ENCODE measurements at regions of chr7 and their contacts with region 1.

Region 1: GRCh38 chr7:95476904-95477594 is 8.7 kb upstream of the ASB4 start:
- DNase-seq: peak in 1 of 2 donors; percentile 45
- ATAC-seq: peak in 6 of 8 donors; percentile 56 to 74 (median 72)
- H3K4me3 ChIP-seq: no peak overlapping the region
- H3K27ac ChIP-seq: no peak overlapping the region
- H3K4me1 ChIP-seq: peaks cover 0 to 10% (median 0%) of the 10 kb centered on the region in 9 donors
- H3K27me3 ChIP-seq: no peaks in the 10 kb centered on the region
- CTCF ChIP-seq: peak; percentile 51 to 88 (median 80)

Region 2: GRCh38 chr7:94449148-94449725 is 1027.8 kb before region 1 on chr7:
- intact Hi-C with region 1: loop called in 6 of 10 experiments (anchors 5 to 10 kb)
- DNase-seq: no peak
- ATAC-seq: peak in 3 of 8 donors; percentile 52 to 59 (median 54)
- H3K4me3 ChIP-seq: no peak overlapping the region
- H3K27ac ChIP-seq: no peak overlapping the region
- H3K4me1 ChIP-seq: peaks cover 0 to 24% (median 8%) of the 10 kb centered on the region in 9 donors
- H3K27me3 ChIP-seq: peaks cover 0 to 6% (median 0%) of the 10 kb centered on the region in 7 donors
- CTCF ChIP-seq: peak; percentile 21 to 78 (median 63)

Region 3: DNA sequence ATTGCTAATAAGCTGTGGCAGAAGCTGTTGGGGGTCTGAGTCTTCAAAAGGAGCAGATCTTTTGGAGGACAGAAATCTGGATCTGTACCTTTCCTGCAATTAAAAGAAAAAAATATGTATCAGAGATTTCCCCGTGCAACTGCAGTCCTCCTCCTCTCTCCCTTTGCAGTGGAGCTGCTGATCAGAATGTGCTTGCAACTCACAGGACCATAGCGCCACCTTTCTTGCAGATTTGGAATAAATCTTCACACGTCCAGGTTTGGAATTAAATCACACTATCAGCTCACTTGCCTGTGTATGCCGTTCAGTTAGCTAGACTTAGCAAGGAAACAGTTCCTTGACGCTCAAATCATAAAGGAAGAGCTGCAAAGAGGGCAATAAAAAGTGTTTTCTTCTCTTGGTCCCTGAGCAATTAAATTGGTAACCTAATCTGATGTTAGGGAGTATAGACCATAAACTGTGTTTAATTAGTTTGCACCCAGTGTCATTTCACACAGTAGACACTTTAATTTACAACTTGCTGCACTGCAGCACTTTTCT is 230.1 kb before region 1 on chr7:
- intact Hi-C with region 1: loop called in 2 of 10 experiments (anchors 10 kb)
- DNase-seq: peak in 1 of 2 donors; percentile 50
- ATAC-seq: peak; percentile 57 to 84 (median 71)
- H3K4me3 ChIP-seq: peak overlapping the region in 2 of 10 donors; percentile 16 to 27
- H3K27ac ChIP-seq: no peak overlapping the region
- H3K4me1 ChIP-seq: no peaks in the 10 kb centered on the region
- H3K27me3 ChIP-seq: no peaks in the 10 kb centered on the region
- CTCF ChIP-seq: peak; percentile 40 to 75 (median 68)

Region 4: GRCh38 chr7:95434557-95435421 is 42.3 kb before region 1 on chr7 and contains the start of gene PON2:
- intact Hi-C with region 1: loop called in 1 of 10 experiments (anchors 5 kb)
- DNase-seq: peak; percentile 73 to 86
- ATAC-seq: peak; percentile 98 to 100 (median 98)
- H3K4me3 ChIP-seq: peak within 1 kb of the TSS; percentile 50 to 90 (median 80)
- H3K27ac ChIP-seq: peak within 1 kb of the TSS; percentile 65 to 98 (median 92)
- H3K4me1 ChIP-seq: peaks cover 0 to 18% (median 9%) of the 10 kb centered on the region in 9 donors
- H3K27me3 ChIP-seq: no peaks in the 10 kb centered on the region
- CTCF ChIP-seq: peak in 2 of 9 donors; percentile 3 to 6
- total RNA-seq, gene PON2: 24.9 to 43.4 (median 32.0) TPM

Region 5: GRCh38 chr7:95560674-95561073 is 83.6 kb after region 1 on chr7:
- intact Hi-C with region 1: no loop called
- DNase-seq: no peak
- ATAC-seq: no peak
- H3K4me3 ChIP-seq: no peak overlapping the region
- H3K27ac ChIP-seq: no peak overlapping the region
- H3K4me1 ChIP-seq: peaks cover 0 to 3% (median 0%) of the 10 kb centered on the region in 9 donors
- H3K27me3 ChIP-seq: no peaks in the 10 kb centered on the region
- CTCF ChIP-seq: no peak